ENCODE measurements at regions of chr13 and their contacts with region 1.

Region 1: DNA sequence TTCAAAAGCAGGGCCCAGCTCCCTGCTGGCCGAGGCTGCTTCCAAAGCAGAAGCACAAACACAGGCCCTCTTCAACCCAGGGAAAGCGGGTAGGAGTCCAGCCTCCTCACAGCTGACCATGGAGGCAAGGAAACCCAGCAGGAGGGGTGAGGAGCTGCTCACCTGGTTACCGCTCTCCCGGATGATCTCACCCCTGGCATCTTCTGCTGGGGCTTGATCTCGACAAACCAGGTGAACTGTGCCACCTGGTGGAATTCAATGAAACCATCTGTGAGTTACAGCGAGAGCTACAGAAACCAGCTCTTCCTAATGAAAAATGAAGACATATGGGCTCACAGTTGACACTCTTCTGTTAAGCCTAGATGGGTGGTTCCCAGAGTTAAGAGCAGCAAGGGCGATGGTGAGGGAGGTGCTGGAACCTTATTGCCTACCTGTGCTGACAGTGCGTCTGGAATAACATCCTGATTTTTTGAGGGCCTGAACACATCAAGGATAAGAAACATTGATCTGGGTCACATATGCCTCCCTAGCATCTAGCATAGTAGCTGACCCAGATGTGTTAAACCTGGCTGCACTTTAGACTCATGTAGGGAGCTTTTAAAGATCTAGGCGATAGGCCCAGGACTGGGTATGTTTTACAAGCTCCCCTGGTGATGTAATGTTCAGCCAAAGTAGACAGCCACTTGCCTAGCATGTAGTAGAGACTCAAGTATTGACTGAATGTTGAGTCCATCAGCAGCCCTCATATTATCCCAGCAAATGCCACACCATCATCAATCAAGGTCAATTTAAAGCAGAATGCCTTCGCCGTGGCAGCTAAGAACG is 6.1 kb downstream of the DHRS12 start:
- DNase-seq: peak; percentile 72 to 82 (median 77)
- H3K4me3 ChIP-seq: no peak overlapping the region
- H3K27ac ChIP-seq: no peak overlapping the region
- H3K4me1 ChIP-seq: peaks cover 19 to 78% (median 61%) of the 10 kb centered on the region in 4 experiments
- H3K27me3 ChIP-seq: no peaks in the 10 kb centered on the region

Region 2: DNA sequence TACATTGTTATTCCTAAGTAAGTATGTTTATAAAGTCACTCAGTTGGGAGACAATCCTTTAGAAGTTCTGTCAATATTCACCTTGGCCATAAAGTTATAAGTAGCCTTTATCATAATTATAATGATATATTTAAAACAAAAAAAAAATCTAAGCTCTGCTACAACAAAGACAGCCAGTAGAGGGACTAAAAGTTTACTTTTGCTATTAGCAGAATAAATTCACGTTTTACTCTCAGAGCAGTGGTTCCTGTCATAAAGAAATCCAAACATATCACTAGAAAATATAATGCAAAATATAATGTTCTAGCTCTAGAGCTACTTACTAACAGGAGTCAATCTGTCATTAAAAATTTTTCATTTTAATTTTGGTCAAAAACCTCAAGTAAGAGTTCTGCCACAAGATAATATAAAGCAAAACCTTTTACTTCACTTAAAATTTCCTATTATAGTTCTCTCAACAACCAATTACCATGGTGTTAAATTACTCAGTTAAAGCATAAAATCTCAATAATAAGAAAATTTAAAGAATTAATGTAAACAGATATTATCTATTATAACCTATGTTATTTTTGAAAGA is 362.8 kb before region 1 on chr13:
- CTCF ChIA-PET with region 1: interaction called, 140 read pairs
- POLR2A ChIA-PET with region 1: no interaction called
- DNase-seq: peak; percentile 36 to 66 (median 62)
- H3K4me3 ChIP-seq: no peak overlapping the region
- H3K27ac ChIP-seq: no peak overlapping the region
- H3K4me1 ChIP-seq: no peaks in the 10 kb centered on the region
- H3K27me3 ChIP-seq: no peaks in the 10 kb centered on the region

Region 3: GRCh38 chr13:51452361-51453206 is 345.3 kb before region 1 on chr13 and contains the start of gene INTS6:
- CTCF ChIA-PET with region 1: interaction called, 140 read pairs
- POLR2A ChIA-PET with region 1: interaction called, 14 read pairs
- DNase-seq: peak; percentile 99 to 100 (median 99)
- H3K4me3 ChIP-seq: peak within 1 kb of the TSS; percentile 83 to 96 (median 90)
- H3K27ac ChIP-seq: peak within 1 kb of the TSS; percentile 96 to 98
- H3K4me1 ChIP-seq: peaks cover 13 to 42% (median 29%) of the 10 kb centered on the region in 4 experiments
- H3K27me3 ChIP-seq: no peaks in the 10 kb centered on the region

Region 4: DNA sequence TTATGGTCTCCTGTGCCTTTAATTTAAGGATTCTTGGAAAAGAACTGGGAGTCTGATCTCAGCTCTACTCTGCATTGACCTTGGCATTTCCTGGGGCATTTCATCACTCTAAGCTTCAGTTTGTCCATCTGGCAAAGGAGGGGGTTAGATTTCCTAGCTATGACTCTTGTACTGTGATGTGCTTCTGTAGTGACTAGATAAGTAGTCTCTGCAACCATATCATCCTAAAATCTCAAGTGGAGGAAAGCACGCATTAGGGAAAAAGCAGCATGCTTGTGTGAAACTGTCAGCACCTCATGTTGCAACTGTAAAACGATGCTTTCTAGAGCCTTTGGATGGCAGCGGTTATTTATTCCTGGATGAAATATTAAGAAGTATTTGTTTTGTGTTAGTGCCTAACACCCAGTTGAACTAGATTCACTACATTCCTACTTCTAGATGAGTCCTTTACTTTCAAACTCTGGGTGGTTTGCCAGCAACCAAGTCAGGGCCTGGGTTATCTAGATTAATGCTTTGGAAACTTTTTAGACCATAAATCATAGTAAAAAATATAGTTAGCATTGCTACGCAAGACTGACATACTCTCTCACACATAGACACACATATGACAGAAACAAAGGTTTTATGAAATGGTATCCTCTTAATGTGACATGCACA is 206.8 kb before region 1 on chr13:
- CTCF ChIA-PET with region 1: interaction called, 14 read pairs
- POLR2A ChIA-PET with region 1: no interaction called
- DNase-seq: peak; percentile 35 to 73 (median 64)
- H3K4me3 ChIP-seq: peak overlapping the region in 2 of 7 experiments; percentile 14 to 25
- H3K27ac ChIP-seq: peak overlapping the region; percentile 56 to 77
- H3K4me1 ChIP-seq: peaks cover 32 to 55% (median 43%) of the 10 kb centered on the region in 4 experiments
- H3K27me3 ChIP-seq: no peaks in the 10 kb centered on the region

Region 5: GRCh38 chr13:51781246-51782022 is 16.4 kb before region 1 on chr13:
- CTCF ChIA-PET with region 1: interaction called, 160 read pairs
- POLR2A ChIA-PET with region 1: interaction called, 3 read pairs
- DNase-seq: peak in 2 of 3 donors; percentile 56 to 60
- H3K4me3 ChIP-seq: no peak overlapping the region
- H3K27ac ChIP-seq: no peak overlapping the region
- H3K4me1 ChIP-seq: peaks cover 3 to 25% (median 17%) of the 10 kb centered on the region in 4 experiments
- H3K27me3 ChIP-seq: no peaks in the 10 kb centered on the region